OCI-LY7 (cell line): ENCODE measurements at regions of chr3 and their contacts with region 1.

Region 1: GRCh38 chr3:105836533-105836932 is 32.3 kb downstream of the CBLB start:
- DNase-seq: peak; percentile 71
- H3K4me3 ChIP-seq: peak overlapping the region; percentile 65
- H3K27ac ChIP-seq: peak overlapping the region; percentile 77
- H3K4me1 ChIP-seq: peaks cover 77% of the 10 kb centered on the region
- CTCF ChIP-seq: peak; percentile 61

Region 2: GRCh38 chr3:105847452-105847851 is 10.9 kb after region 1 on chr3:
- CTCF ChIA-PET with region 1: interaction called, 6 read pairs
- POLR2A ChIA-PET with region 1: interaction called, 20 read pairs
- intact Hi-C with region 1: no loop called
- DNase-seq: no peak
- H3K4me3 ChIP-seq: no peak overlapping the region
- H3K27ac ChIP-seq: no peak overlapping the region
- H3K4me1 ChIP-seq: peaks cover 27% of the 10 kb centered on the region
- CTCF ChIP-seq: no peak

Region 3: DNA sequence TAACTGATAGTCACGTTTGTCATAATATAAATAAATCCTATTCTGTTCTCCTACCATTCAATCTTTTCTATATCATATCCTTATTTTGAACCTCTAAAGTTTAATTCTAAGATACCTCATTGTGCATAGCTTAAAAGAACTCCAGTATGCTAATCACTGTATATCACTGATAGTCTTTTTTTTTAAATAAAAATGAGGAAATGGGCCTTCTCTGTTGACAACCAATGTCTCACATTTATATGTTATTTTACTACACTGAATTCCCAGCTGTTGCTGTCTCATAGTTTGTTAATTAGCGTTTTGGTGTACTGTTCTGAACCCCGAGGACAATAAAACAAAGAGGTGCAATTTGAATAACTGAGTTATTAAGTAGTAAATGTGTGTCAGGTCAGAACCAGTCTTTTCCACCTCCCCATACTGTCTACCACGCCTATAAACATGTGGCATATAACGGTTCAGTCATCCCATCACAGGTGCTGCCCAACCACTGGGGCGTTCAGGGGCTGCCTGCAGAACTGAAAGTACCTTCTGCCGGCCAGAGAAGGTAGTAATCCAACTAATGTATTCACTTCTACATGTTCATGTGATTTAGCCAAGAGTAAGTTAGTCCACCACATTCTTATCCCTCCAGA is 17.4 kb after region 1 on chr3:
- CTCF ChIA-PET with region 1: no interaction called
- POLR2A ChIA-PET with region 1: interaction called, 37 read pairs
- intact Hi-C with region 1: no loop called
- DNase-seq: peak; percentile 95
- H3K4me3 ChIP-seq: peak overlapping the region; percentile 32
- H3K27ac ChIP-seq: peak overlapping the region; percentile 93
- H3K4me1 ChIP-seq: peaks cover 57% of the 10 kb centered on the region
- CTCF ChIP-seq: no peak